ENCODE measurements at regions of chr2 and their contacts with region 1.

Region 1: GRCh38 chr2:200888704-200889625 is at the starts of genes NIF3L1 and PPIL3:
- DNase-seq: peak; percentile 99
- H3K4me3 Mint-ChIP-seq: peak within 1 kb of the TSS; percentile 88
- H3K27ac Mint-ChIP-seq: peak within 1 kb of the TSS; percentile 97
- H3K4me1 Mint-ChIP-seq: peaks cover 50% of the 10 kb centered on the region
- H3K27me3 Mint-ChIP-seq: no peaks in the 10 kb centered on the region
- total RNA-seq, gene NIF3L1: 31.6 to 33.3 TPM
- total RNA-seq, gene PPIL3: 81.3 to 82.2 TPM

Region 2: GRCh38 chr2:200578778-200579177 is 310.2 kb before region 1 on chr2:
- CTCF ChIA-PET with region 1: no interaction called
- intact Hi-C with region 1: loop called (anchors 2 kb)
- DNase-seq: peak; percentile 18
- H3K4me3 Mint-ChIP-seq: no peak overlapping the region
- H3K27ac Mint-ChIP-seq: peak overlapping the region; percentile 16
- H3K4me1 Mint-ChIP-seq: peaks cover 14% of the 10 kb centered on the region
- H3K27me3 Mint-ChIP-seq: no peaks in the 10 kb centered on the region

Region 3: DNA sequence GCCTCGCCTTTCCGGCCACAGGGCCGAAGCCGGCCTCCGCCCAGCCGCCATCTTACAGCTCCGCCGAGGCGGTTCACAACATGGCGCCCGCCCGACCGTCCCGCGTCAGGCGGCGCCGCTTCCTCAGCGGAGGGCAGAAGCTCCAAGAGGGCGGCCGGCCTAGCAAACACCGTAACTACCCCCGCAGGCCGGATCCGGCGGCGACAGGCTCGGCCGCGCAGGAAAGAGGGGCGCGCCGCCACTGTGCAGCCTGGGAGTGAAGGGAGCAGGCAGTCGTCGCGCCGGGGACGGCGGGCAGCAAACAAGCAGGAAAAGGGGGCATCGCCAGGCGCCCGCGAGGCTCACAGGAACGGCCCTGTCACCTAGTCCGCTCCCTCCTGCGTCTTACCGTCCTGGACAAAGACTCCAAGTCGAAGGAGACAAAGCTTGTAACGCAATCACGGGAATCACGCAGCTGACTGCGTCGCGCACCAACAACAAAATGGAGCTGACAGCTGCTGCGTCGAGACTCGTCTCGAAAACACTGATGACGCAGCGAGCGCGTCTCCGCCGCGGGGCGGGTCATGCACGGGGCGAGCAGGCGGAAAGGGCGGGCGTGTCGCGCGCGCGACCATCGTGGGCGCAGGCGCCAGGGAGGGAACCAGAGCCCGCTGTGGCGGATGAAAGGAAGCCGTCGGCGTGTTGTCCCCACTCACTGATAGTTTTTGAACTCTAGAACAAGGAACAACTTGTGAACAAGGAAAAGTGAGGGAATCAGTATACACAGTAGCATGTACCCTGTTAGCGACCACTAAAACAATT is 24.6 kb before region 1 on chr2 and contains the start of gene CLK1:
- CTCF ChIA-PET with region 1: interaction called, 7 read pairs
- intact Hi-C with region 1: loop called (anchors 1 kb)
- DNase-seq: peak; percentile 98
- H3K4me3 Mint-ChIP-seq: peak within 1 kb of the TSS; percentile 98
- H3K27ac Mint-ChIP-seq: peak within 1 kb of the TSS; percentile 100
- H3K4me1 Mint-ChIP-seq: peaks cover 32% of the 10 kb centered on the region
- H3K27me3 Mint-ChIP-seq: no peaks in the 10 kb centered on the region
- total RNA-seq, gene CLK1: 174 to 196 TPM

Region 4: DNA sequence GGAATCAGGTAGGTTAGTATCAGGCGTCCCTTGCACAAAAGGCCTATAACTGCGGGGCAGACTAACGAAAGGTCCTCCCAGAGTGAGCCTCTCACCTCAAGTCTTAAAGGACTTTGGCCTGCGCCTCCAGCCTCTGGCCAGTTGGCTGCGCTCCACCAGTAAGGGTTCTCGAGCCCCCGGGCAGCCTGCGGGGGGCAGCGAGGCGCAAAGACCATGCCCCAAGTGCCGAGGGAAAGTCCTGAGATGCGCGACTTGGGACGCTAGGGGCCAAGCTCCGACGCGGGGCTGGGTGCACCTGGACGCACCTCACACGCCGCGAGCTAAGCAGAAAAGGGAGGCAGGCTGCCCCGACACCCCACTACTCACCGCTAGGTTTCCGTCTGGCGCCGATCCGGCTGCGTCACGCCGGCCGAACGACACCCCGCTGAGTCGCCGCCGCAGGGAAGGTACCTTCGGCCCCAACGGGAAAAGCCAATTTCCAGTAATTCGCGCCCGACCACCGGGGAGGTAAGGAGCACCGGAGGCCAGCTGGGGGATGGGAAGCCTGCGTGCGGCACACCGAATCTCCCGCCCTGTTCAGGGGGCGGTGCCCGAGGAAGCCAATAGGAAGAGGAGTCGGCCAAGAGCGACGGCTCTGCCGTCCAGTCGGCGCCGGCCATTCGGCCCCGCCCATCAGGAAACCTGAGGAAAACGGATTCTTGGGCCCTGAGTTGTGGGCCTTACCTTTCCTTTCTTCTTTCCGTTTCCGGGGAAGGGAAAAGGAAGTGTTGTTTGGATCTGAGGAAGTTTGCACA is 74.4 kb after region 1 on chr2 and contains the start of gene ORC2:
- CTCF ChIA-PET with region 1: interaction called, 3 read pairs
- intact Hi-C with region 1: loop called (anchors 1 kb)
- DNase-seq: peak; percentile 94
- H3K4me3 Mint-ChIP-seq: peak within 1 kb of the TSS; percentile 88
- H3K27ac Mint-ChIP-seq: peak within 1 kb of the TSS; percentile 94
- H3K4me1 Mint-ChIP-seq: peaks cover 56% of the 10 kb centered on the region
- H3K27me3 Mint-ChIP-seq: no peaks in the 10 kb centered on the region
- total RNA-seq, gene ORC2: 53.7 to 56.8 TPM

Region 5: GRCh38 chr2:201130524-201131186 is 241.7 kb after region 1 on chr2:
- CTCF ChIA-PET with region 1: no interaction called
- intact Hi-C with region 1: loop called (anchors 1 kb)
- DNase-seq: peak; percentile 68
- H3K4me3 Mint-ChIP-seq: peak overlapping the region; percentile 76
- H3K27ac Mint-ChIP-seq: peak overlapping the region; percentile 96
- H3K4me1 Mint-ChIP-seq: peaks cover 56% of the 10 kb centered on the region
- H3K27me3 Mint-ChIP-seq: no peaks in the 10 kb centered on the region

Measured in activated naive CD4-positive, alpha-beta T cell treated with anti-CD3 and anti-CD28 coated beads for 36 hours (primary cell).